HAP-1 (cell line): ENCODE measurements at regions of chrX and their contacts with region 1.

Region 1: DNA sequence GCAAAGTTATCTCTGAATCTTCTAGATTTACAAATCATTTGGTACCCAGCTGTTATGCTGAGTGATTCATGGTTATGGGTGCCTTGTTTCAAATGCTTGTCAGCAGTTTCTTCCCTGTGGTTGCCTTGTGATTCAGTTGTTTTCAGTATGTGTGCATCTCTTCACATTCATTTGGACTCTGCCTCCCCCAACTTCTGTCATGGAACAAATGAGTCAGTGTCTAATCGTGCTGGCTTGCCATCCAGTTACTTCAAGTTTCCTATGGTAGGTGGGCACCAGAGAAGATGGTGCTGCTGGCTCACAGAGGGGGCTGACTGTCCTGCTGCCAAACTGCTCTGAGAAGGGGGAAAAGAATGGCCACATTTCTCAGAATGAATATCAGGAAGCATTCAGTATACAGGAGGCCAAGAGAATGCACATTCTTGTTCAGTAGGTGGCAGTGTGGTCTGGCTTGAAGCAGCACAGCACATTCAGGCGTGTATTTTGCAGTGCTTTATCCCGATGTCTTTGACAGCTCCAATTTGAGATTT is 260.9 kb downstream of the GLUD2 start:
- DNase-seq: peak; percentile 59 to 61
- H3K4me3 ChIP-seq: no peak overlapping the region
- H3K4me1 ChIP-seq: no peaks in the 10 kb centered on the region
- H3K27me3 ChIP-seq: no peaks in the 10 kb centered on the region

Region 2: GRCh38 chrX:121570072-121570841 is 261.9 kb after region 1 on chrX:
- in situ Hi-C with region 1: loop called (anchors 25 kb)
- DNase-seq: no peak
- H3K4me3 ChIP-seq: no peak overlapping the region
- H3K4me1 ChIP-seq: no peaks in the 10 kb centered on the region
- H3K27me3 ChIP-seq: no peaks in the 10 kb centered on the region